Left ventricle myocardium inferior (tissue), 1 donor: ENCODE measurements at regions of chr3 and their contacts with region 1.

Region 1: GRCh38 chr3:4978204-4978965 is 852 bp upstream of the BHLHE40 start:
- DNase-seq: peak; percentile 98
- H3K4me3 ChIP-seq: peak overlapping the region; percentile 98
- H3K27ac ChIP-seq: peak overlapping the region; percentile 100
- H3K4me1 ChIP-seq: peaks cover 55% of the 10 kb centered on the region
- H3K27me3 ChIP-seq: no peaks in the 10 kb centered on the region
- CTCF ChIP-seq: no peak

Region 2: GRCh38 chr3:4551051-4551711 is 427.2 kb before region 1 on chr3:
- intact Hi-C with region 1: no loop called
- DNase-seq: peak; percentile 50
- H3K4me3 ChIP-seq: no peak overlapping the region
- H3K27ac ChIP-seq: peak overlapping the region; percentile 79
- H3K4me1 ChIP-seq: peaks cover 56% of the 10 kb centered on the region
- H3K27me3 ChIP-seq: no peaks in the 10 kb centered on the region
- CTCF ChIP-seq: no peak

Region 3: DNA sequence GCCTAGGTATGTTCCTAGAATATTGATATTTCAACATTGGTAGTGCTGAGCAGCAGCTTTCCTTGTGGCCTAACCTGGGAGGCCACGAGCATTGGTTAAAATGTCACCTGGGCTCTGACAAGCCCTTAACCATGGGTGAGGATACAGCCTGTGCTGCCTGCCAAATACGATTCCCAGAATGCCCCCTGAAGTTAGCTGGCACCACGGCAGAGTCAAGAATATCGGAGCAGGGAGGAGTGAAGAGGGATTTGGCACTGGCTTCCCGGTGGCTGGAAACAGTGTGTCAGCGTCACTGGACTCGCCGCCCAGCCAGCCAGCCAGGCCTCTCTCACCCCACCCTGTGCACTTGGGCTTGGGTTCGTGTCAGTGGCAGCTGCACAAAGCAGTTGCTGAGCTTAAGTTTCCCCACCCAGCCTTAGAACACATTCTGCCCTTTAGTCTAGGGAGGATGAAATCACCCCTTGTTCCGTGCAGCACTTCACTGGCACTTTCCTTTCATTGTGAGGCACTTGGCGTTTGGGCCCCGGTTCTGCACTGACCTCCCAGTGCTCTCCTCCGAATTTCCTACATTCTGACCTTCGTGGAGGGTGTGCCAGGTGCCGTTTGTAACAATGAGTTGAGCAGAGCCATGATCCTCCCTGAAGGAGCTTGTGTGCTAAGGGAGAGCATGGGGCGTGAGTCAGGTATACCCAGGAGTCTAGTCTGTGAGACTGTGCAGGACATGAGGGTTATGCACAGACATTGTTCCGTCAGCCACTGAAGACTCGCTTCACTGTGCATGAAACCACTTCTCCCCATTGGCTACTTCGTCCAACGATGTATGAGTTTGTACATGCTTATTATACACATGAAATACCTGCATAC is 151.9 kb before region 1 on chr3:
- intact Hi-C with region 1: loop called (anchors 5 kb)
- DNase-seq: peak; percentile 85
- H3K4me3 ChIP-seq: peak overlapping the region; percentile 26
- H3K27ac ChIP-seq: peak overlapping the region; percentile 86
- H3K4me1 ChIP-seq: peaks cover 49% of the 10 kb centered on the region
- H3K27me3 ChIP-seq: no peaks in the 10 kb centered on the region
- CTCF ChIP-seq: no peak

Region 4: DNA sequence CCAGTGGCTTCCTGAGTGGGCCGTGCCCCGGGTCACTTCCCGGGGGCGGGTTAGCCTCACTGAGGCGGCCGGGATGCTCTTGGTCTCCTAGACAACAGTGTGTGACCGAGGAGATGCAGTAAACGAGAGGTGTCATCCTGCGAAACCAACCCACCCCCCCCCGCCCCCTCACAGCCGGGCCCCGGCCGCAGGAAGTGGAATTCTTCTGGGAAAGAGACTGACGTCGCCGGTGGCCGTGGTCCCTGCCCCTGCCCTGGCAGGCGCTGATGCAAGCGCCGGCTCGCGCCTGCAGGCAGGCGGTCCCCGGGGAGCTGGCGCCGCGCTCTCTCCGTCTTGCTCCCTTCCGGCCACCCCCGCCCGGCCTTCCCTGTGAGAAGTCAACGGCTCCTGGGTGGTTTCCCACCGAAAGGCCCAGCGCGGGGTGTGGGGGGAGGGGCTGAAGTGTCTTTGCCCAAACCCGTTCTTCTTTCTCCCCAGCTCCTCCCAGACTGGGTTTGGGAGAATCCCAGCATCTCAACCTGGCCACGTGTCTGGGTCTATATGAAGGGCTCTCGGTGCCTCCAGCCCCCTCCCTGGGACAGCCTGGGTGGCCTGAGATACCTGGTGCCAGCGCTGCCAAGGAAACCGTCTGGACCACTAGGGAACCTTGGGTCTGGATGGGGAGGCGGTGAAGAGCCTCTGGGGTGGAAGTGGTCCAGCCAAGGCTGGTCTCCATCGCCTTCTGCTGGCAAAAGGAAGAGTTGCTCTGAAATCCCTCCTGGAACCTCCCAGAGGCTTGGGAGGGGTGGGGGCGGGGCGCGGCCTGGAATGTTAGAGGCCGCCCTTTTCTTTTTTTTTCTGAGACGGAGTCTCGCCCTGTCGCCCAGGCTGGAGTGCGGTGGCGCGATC is 48.2 kb after region 1 on chr3:
- intact Hi-C with region 1: loop called (anchors 5 kb)
- DNase-seq: peak; percentile 90
- H3K4me3 ChIP-seq: peak overlapping the region; percentile 70
- H3K27ac ChIP-seq: peak overlapping the region; percentile 90
- H3K4me1 ChIP-seq: peaks cover 9% of the 10 kb centered on the region
- H3K27me3 ChIP-seq: no peaks in the 10 kb centered on the region
- CTCF ChIP-seq: peak; percentile 73

Region 5: DNA sequence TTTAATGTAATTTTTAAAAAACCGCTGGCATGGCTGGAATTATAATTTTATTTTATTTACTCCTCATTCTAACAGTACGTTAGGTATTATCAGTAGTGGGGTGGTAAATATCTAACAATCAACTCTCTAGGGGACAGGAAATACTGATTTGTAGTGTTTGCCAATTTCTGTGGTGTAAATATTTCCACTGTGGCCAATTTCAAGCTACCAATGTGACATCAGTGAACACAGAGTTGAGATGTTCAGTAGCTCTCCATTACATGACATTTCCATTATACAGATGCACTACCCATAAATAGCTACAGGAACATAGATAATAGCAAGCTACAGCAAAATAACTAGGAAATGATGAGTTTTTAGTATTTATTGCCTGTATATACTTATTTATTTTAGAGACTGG is 133.7 kb after region 1 on chr3:
- intact Hi-C with region 1: no loop called
- DNase-seq: no peak
- H3K4me3 ChIP-seq: no peak overlapping the region
- H3K27ac ChIP-seq: no peak overlapping the region
- H3K4me1 ChIP-seq: no peaks in the 10 kb centered on the region
- H3K27me3 ChIP-seq: peaks cover 12% of the 10 kb centered on the region
- CTCF ChIP-seq: no peak